B cell (primary cell): ENCODE measurements at regions of chr11 and their contacts with region 1.

Region 1: DNA sequence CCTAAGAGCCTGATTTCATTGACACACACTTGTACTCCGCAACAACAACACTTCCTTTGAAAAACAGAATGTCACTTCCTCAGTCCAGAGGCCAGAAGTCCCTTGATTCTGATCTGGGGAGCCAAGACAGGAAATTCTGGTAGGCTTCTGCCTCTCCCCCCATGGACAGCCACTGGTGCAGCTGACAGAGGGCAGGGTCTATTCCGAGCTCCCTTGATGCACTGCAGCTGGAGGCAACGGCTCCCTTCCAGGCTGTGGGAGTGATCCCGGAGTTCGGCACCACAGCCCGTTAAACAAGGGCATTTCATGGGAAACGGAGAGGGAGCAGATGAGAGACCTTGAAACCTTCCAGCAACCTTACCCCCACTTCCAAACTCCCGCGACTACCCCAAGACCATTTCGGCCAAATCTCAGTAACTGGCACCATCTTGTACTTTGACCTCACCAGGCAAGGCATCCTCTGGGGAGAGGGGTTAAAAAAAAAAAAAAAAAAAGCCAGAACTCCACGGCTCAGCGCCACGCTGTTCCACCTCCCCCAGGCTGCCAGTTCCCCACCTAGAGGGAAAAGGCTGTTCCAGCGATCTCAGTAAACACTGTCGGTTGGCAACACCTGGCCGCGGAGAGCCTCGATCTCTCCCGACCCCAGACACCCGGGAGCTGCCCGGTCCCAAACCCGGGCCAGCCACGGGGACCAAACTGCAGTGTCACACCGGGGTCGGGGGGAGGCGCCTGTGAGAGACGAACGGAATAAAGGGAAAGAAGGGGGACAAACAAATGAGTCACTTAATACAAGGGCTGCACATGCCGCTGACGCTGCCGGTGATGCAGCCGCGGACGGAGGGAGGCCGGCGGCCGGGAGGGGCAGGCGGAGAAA is 1.1 kb downstream of the GAB2 start:
- DNase-seq: peak; percentile 87
- ATAC-seq: peak; percentile 48
- H3K4me3 ChIP-seq: peak overlapping the region; percentile 35 to 84 (median 75)
- H3K4me3 Mint-ChIP-seq: peak overlapping the region; percentile 97
- H3K27ac ChIP-seq: peak overlapping the region; percentile 48 to 62
- H3K27ac Mint-ChIP-seq: peak overlapping the region; percentile 98
- H3K4me1 ChIP-seq: peaks cover 42 to 58% of the 10 kb centered on the region in 2 donors
- H3K4me1 Mint-ChIP-seq: peaks cover 74% of the 10 kb centered on the region
- H3K27me3 ChIP-seq: no peaks in the 10 kb centered on the region
- H3K27me3 Mint-ChIP-seq: no peaks in the 10 kb centered on the region
- CTCF ChIP-seq: peak; percentile 63

Region 2: GRCh38 chr11:78139422-78140391 is 276.8 kb before region 1 on chr11 and contains the start of gene ALG8:
- CTCF ChIA-PET with region 1: interaction called, 5 read pairs
- POLR2A ChIA-PET with region 1: no interaction called
- intact Hi-C with region 1: loop called (anchors 5 kb)
- DNase-seq: peak; percentile 96
- ATAC-seq: peak; percentile 95
- H3K4me3 ChIP-seq: peak within 1 kb of the TSS; percentile 77 to 97 (median 85)
- H3K4me3 Mint-ChIP-seq: peak within 1 kb of the TSS; percentile 99
- H3K27ac ChIP-seq: peak within 1 kb of the TSS; percentile 63 to 86
- H3K27ac Mint-ChIP-seq: peak within 1 kb of the TSS; percentile 97
- H3K4me1 ChIP-seq: peaks cover 25 to 36% of the 10 kb centered on the region in 2 donors
- H3K4me1 Mint-ChIP-seq: peaks cover 44% of the 10 kb centered on the region
- H3K27me3 ChIP-seq: no peaks in the 10 kb centered on the region
- H3K27me3 Mint-ChIP-seq: no peaks in the 10 kb centered on the region
- CTCF ChIP-seq: no peak
- total RNA-seq, gene ALG8: 28.5 and 35.3 TPM in 2 replicates

Region 3: DNA sequence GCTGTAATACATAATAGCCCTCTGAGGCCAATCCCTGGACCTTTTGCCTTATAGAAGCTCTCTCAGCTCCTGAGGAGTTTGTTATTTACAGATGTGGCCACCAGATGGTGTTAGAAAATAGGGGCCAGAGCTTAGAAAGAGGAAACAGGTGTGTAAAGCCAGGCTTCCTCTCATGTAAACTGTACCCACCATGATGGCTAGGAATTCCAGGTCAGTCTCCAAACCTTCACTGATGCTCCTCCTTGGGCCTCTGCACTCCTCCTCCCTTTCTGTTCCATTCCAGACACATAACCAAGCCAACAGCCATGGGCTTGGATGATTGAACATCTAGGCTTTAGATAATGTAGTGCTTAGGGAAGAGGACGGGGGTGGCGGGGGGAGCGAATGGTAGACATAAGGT is 188.1 kb before region 1 on chr11:
- CTCF ChIA-PET with region 1: interaction called, 18 read pairs
- POLR2A ChIA-PET with region 1: no interaction called
- intact Hi-C with region 1: loop called (anchors 2 kb)
- DNase-seq: peak; percentile 73
- ATAC-seq: peak; percentile 79
- H3K4me3 ChIP-seq: no peak overlapping the region
- H3K4me3 Mint-ChIP-seq: no peak overlapping the region
- H3K27ac ChIP-seq: peak overlapping the region in 1 of 2 donors; percentile 2
- H3K27ac Mint-ChIP-seq: no peak overlapping the region
- H3K4me1 ChIP-seq: peaks cover 38 to 42% of the 10 kb centered on the region in 2 donors
- H3K4me1 Mint-ChIP-seq: peaks cover 52% of the 10 kb centered on the region
- H3K27me3 ChIP-seq: no peaks in the 10 kb centered on the region
- H3K27me3 Mint-ChIP-seq: no peaks in the 10 kb centered on the region
- CTCF ChIP-seq: peak; percentile 78

Region 4: DNA sequence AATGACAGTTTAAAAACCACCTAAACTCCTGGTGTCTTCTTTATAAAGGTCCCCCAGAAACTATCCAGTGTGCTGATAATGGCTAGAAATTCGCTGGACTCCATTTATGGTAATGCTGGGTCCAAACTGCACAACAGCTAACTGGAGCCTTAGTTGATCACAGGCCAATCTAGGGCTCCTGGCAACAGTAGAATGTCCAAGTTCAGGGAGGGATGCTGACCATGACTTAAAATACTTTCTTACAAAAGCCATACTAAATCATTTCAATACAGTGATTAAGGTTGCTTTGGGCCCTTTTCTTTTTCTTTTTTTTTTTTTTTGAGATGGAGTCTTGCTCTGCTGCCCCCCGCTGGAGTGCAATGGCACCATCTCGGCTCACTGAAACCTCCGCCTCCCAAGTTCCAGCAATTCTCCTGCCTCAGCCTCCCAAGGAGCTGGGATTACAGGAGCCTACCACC is 15.5 kb after region 1 on chr11:
- CTCF ChIA-PET with region 1: interaction called, 143 read pairs
- POLR2A ChIA-PET with region 1: interaction called, 48 read pairs
- intact Hi-C with region 1: loop called (anchors 1 kb)
- DNase-seq: peak; percentile 44
- ATAC-seq: no peak
- H3K4me3 ChIP-seq: no peak overlapping the region
- H3K4me3 Mint-ChIP-seq: no peak overlapping the region
- H3K27ac ChIP-seq: no peak overlapping the region
- H3K27ac Mint-ChIP-seq: peak overlapping the region; percentile 20
- H3K4me1 ChIP-seq: peaks cover 34 to 38% of the 10 kb centered on the region in 2 donors
- H3K4me1 Mint-ChIP-seq: peaks cover 42% of the 10 kb centered on the region
- H3K27me3 ChIP-seq: no peaks in the 10 kb centered on the region
- H3K27me3 Mint-ChIP-seq: no peaks in the 10 kb centered on the region
- CTCF ChIP-seq: peak; percentile 72

Region 5: GRCh38 chr11:78465169-78465942 is 48.8 kb after region 1 on chr11:
- CTCF ChIA-PET with region 1: interaction called, 14 read pairs
- POLR2A ChIA-PET with region 1: interaction called, 5 read pairs
- intact Hi-C with region 1: loop called (anchors 2 kb)
- DNase-seq: peak; percentile 81
- ATAC-seq: peak; percentile 89
- H3K4me3 ChIP-seq: peak overlapping the region in 3 of 5 experiments; percentile 16 to 34 (median 20)
- H3K4me3 Mint-ChIP-seq: peak overlapping the region; percentile 72
- H3K27ac ChIP-seq: peak overlapping the region; percentile 90 to 92
- H3K27ac Mint-ChIP-seq: peak overlapping the region; percentile 95
- H3K4me1 ChIP-seq: peaks cover 26 to 27% of the 10 kb centered on the region in 2 donors
- H3K4me1 Mint-ChIP-seq: peaks cover 44% of the 10 kb centered on the region
- H3K27me3 ChIP-seq: no peaks in the 10 kb centered on the region
- H3K27me3 Mint-ChIP-seq: no peaks in the 10 kb centered on the region
- CTCF ChIP-seq: no peak

Region 6: DNA sequence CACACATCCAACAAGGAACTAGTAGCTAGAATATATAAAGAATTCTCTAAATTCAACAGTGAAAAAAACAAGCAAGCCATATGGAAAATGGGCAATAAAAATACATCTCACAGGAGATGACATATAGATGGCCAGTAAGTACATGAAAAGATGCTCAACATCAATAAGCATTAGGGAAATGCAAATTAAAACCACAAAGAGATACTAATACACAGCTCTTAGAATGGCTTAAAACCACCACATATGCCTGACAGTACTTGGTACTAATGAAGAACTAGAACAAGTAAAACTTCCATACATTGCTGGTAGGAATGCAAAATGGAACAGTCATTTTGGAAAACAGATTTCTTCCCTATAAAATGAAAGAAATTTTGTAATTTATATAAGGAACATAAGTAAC is 72.6 kb after region 1 on chr11:
- CTCF ChIA-PET with region 1: no interaction called
- POLR2A ChIA-PET with region 1: no interaction called
- intact Hi-C with region 1: no loop called
- DNase-seq: no peak
- ATAC-seq: no peak
- H3K4me3 ChIP-seq: no peak overlapping the region
- H3K4me3 Mint-ChIP-seq: no peak overlapping the region
- H3K27ac ChIP-seq: no peak overlapping the region
- H3K27ac Mint-ChIP-seq: no peak overlapping the region
- H3K4me1 ChIP-seq: no peaks in the 10 kb centered on the region
- H3K4me1 Mint-ChIP-seq: no peaks in the 10 kb centered on the region
- H3K27me3 ChIP-seq: no peaks in the 10 kb centered on the region
- H3K27me3 Mint-ChIP-seq: no peaks in the 10 kb centered on the region
- CTCF ChIP-seq: no peak